ENCODE measurements at regions of chr12 and their contacts with region 1.

Region 1: GRCh38 chr12:54439521-54440255 is 20.6 kb upstream of the ITGA5 start:
- DNase-seq: no peak
- H3K4me3 ChIP-seq: no peak overlapping the region
- H3K27ac ChIP-seq: peak overlapping the region; percentile 18 to 71 (median 70)
- H3K4me1 ChIP-seq: peaks cover 5 to 36% (median 32%) of the 10 kb centered on the region in 4 donors
- H3K27me3 ChIP-seq: no peaks in the 10 kb centered on the region
- CTCF ChIP-seq: peak; percentile 76 to 93 (median 81)
- EP300 ChIP-seq: peak; percentile 10
- POLR2A ChIP-seq: no peak

Region 2: DNA sequence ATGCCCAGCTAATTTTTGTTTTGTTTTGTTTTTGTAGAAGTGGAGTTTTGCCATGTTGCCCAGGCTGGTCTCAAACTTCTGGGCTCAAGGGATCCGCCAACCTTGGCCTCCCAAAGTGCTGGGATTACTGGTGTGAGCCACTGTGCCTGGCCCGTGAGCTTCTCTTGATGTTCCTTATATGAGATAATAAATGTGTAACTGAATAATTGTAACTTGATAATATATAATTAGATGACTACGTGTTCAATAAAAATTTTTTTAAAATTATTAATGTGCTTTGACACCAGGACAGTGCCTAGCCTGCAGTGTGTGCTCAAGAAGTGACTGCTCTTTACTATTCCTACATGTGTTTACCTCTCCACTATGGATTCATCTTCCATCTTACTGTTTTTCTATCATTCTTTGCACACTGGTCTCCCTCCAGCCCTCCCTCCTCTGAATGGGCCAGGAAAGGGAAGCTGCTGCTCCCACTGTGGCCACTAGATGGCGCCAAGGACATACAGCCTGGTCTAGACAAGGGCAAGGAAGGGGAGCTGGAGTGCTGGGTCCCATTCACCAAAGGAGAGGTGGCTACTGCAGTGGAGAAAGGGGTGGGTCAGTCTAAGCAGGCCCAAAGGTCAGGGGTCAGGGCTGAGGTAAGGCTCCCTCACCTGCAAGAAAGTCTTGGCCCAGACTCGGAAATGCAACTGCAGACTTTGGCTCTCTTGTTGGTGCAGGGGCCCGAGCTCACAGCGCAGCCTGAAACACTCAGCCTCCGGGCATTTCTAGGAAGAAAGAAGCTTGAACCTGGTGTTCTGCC is 40.5 kb before region 1 on chr12:
- intact Hi-C with region 1: loop called (anchors 1 kb)
- DNase-seq: peak; percentile 98
- H3K4me3 ChIP-seq: no peak overlapping the region
- H3K27ac ChIP-seq: peak overlapping the region in 3 of 4 donors; percentile 21 to 97 (median 49)
- H3K4me1 ChIP-seq: peaks cover 0 to 43% (median 32%) of the 10 kb centered on the region in 4 donors
- H3K27me3 ChIP-seq: no peaks in the 10 kb centered on the region
- CTCF ChIP-seq: peak; percentile 96 to 99 (median 98)
- EP300 ChIP-seq: no peak
- POLR2A ChIP-seq: no peak

Region 3: GRCh38 chr12:54509617-54510016 is 69.9 kb after region 1 on chr12:
- intact Hi-C with region 1: no loop called
- DNase-seq: peak; percentile 83
- H3K4me3 ChIP-seq: no peak overlapping the region
- H3K27ac ChIP-seq: no peak overlapping the region
- H3K4me1 ChIP-seq: no peaks in the 10 kb centered on the region
- H3K27me3 ChIP-seq: no peaks in the 10 kb centered on the region
- CTCF ChIP-seq: no peak
- EP300 ChIP-seq: no peak
- POLR2A ChIP-seq: no peak